Activated T-helper 1 cell treated with anti-CD3 and anti-CD28 coated beads, Interleukin-12 subunit alpha, Interleukin-12 subunit beta, Interleukin-2, Interleukin-4 antibody, amounts not matched to agents 30 ng/mL and 10 ng/mL and 1 ng/mL, durations not matched to agents 14 hours and 24 hours and 36 hours (primary cell): ENCODE measurements at regions of chr20 and their contacts with region 1.

Region 1: GRCh38 chr20:63864847-63865640 is at the start of gene TPD52L2:
- DNase-seq: peak; percentile 98
- H3K4me3 Mint-ChIP-seq: peak within 1 kb of the TSS; percentile 96
- H3K27ac Mint-ChIP-seq: peak within 1 kb of the TSS; percentile 96
- H3K4me1 Mint-ChIP-seq: peaks cover 19% of the 10 kb centered on the region
- H3K27me3 Mint-ChIP-seq: no peaks in the 10 kb centered on the region
- total RNA-seq, gene TPD52L2: 65.9 and 73.2 TPM in 2 replicates

Region 2: DNA sequence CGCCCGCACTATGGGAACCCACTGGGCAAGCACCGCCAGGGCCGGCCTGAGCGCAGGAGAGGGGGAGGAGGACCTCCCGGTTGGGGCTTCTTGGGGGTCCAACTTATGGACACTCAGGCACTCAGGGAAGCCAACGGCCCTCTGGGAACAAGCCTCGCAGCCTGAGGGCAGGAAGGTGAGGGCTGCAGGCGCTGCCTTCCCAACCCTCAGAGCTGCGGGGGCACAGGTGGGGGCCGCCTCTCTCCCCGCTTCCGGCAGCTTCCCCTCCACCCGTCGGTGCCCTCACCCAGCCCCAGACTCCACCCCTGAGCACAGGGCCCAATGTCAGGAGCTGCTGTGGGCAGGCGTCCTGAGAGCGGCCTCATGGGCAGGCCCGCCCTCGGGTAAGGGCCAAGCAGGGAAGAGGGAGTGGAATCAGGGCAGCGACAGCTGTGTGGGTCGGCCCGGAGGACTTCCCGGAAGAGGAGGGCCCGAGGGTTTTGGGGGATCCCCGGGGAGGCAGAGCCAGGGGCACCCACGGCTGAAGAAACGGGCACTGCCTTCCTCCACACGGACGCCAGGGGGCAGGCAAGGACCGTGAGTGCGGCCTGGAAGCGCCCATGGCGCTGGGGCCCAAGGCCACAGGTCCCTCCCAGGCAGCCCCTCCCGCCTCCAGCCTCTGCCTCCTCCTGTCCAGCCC is 327.4 kb before region 1 on chr20:
- intact Hi-C with region 1: loop called (anchors 1 kb)
- DNase-seq: peak; percentile 95
- H3K4me3 Mint-ChIP-seq: peak overlapping the region; percentile 68
- H3K27ac Mint-ChIP-seq: peak overlapping the region; percentile 90
- H3K4me1 Mint-ChIP-seq: no peaks in the 10 kb centered on the region
- H3K27me3 Mint-ChIP-seq: peaks cover 1% of the 10 kb centered on the region

Region 3: GRCh38 chr20:63657937-63658748 is 206.9 kb before region 1 on chr20 and contains the start of gene RTEL1:
- intact Hi-C with region 1: loop called (anchors 1 kb)
- DNase-seq: peak; percentile 87
- H3K4me3 Mint-ChIP-seq: peak within 1 kb of the TSS; percentile 94
- H3K27ac Mint-ChIP-seq: peak within 1 kb of the TSS; percentile 95
- H3K4me1 Mint-ChIP-seq: peaks cover 41% of the 10 kb centered on the region
- H3K27me3 Mint-ChIP-seq: peaks cover 7% of the 10 kb centered on the region
- total RNA-seq, gene RTEL1: 54.4 and 55.5 TPM in 2 replicates

Region 4: GRCh38 chr20:63785691-63786131 is 79.3 kb before region 1 on chr20:
- intact Hi-C with region 1: loop called (anchors 1 kb)
- DNase-seq: no peak
- H3K4me3 Mint-ChIP-seq: no peak overlapping the region
- H3K27ac Mint-ChIP-seq: no peak overlapping the region
- H3K4me1 Mint-ChIP-seq: peaks cover 7% of the 10 kb centered on the region
- H3K27me3 Mint-ChIP-seq: peaks cover 8% of the 10 kb centered on the region

Region 5: DNA sequence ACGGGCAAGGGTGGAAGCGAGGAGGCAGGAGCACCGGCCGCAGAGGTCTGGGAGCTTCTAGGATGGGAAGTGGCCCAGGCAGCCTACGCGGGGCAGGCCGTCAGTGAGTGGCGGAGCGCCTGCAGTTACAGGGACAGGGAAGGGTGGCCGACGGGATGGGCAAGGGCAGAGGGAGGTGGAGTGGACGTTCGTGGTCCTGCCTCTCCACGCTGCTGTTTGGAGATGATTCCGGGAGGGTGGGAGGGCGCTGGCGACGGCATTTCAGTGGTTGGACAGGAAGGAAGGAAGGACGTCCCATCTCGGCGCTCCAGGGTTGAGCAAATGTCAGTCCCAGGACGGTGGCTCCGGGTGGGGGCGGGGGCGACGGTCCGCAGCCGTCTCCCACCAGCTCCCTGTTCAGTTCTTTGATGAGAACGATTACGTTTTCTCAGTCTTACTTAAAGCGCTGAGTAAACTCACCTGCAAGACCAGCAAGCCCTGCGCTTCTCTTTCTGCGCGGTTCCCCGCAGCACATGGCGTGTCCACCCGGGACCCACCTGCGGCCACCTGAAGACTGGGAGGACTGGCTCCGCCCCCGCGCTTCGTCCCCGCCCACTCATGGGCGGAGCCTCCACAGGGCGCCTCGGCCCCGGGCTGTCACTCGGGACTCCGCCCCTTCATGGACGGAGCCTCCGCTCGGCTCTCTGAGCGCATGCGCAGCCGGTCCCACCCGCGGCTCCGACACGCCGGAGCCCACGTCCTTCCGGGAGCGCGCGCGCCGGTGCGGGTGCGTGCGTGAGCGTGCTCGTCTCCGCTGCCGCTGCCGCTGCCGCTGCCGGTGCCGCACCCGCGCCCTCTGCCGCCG is 29.5 kb after region 1 on chr20 and contains the start of gene DNAJC5:
- intact Hi-C with region 1: loop called (anchors 1 kb)
- DNase-seq: peak; percentile 98
- H3K4me3 Mint-ChIP-seq: peak within 1 kb of the TSS; percentile 89
- H3K27ac Mint-ChIP-seq: peak within 1 kb of the TSS; percentile 96
- H3K4me1 Mint-ChIP-seq: peaks cover 42% of the 10 kb centered on the region
- H3K27me3 Mint-ChIP-seq: no peaks in the 10 kb centered on the region
- total RNA-seq, gene DNAJC5: 47.5 and 48.2 TPM in 2 replicates

Region 6: DNA sequence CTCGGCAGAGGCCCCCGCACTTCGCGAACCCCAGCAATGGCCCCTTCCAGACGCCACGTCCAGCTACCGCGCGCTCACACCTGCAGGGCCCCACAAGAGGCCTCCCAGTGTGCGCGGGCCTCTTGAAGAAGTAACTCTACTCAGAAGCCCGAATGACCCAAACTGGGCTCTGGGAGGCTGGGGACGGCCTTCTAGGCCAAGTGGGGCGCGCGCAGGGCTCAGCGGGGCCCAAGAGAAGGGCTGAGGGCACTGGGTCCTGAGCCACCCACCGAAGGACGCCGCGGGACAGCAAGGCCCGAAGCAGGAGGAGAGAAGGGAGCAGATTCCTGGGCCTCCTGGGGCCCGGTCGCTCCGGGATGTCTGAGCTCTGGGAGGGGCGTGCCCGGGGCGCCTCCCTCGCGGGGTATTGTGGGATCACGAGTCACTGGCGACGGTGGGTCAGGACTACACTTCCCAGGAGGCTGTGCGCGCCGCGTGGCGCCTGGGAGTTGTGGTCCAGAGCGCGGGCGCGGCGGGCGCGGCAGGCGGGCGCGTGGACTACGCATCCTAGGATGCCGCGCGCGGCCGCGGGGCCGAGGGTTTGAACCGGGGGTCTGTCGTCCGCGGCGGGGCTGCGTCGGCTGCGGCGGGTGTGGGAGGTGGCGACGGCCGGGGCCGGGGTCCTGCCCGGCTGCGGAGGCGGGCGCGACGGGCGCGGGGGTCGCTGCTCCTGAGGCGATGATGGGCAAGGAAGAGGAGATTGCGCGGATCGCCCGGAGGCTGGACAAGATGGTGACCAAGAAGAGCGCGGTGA is 197.7 kb after region 1 on chr20 and contains the start of gene TCEA2:
- intact Hi-C with region 1: loop called (anchors 1 kb)
- DNase-seq: peak; percentile 94
- H3K4me3 Mint-ChIP-seq: peak within 1 kb of the TSS; percentile 93
- H3K27ac Mint-ChIP-seq: peak within 1 kb of the TSS; percentile 95
- H3K4me1 Mint-ChIP-seq: peaks cover 56% of the 10 kb centered on the region
- H3K27me3 Mint-ChIP-seq: no peaks in the 10 kb centered on the region
- total RNA-seq, gene TCEA2: 33.8 TPM in 2 replicates